ENCODE measurements at regions of chr13 and their contacts with region 1.

Region 1: GRCh38 chr13:26377038-26377437 is 123.1 kb downstream of the CDK8 start:
- DNase-seq: peak; percentile 44
- ATAC-seq: peak; percentile 45; the same call in 1 of the 2 replicates
- H3K4me3 ChIP-seq: no peak overlapping the region
- H3K27ac ChIP-seq: no peak overlapping the region
- H3K4me1 ChIP-seq: no peaks in the 10 kb centered on the region
- H3K27me3 ChIP-seq: no peaks in the 10 kb centered on the region
- CTCF ChIP-seq: peak; percentile 58

Region 2: GRCh38 chr13:26498656-26499591 is 121.9 kb after region 1 on chr13:
- CTCF ChIA-PET with region 1: interaction called, 3 read pairs
- POLR2A ChIA-PET with region 1: no interaction called
- intact Hi-C with region 1: loop called (anchors 5 kb)
- DNase-seq: peak; percentile 28
- ATAC-seq: peak; percentile 53
- H3K4me3 ChIP-seq: no peak overlapping the region
- H3K27ac ChIP-seq: no peak overlapping the region
- H3K4me1 ChIP-seq: no peaks in the 10 kb centered on the region
- H3K27me3 ChIP-seq: no peaks in the 10 kb centered on the region; the same call in 1 of the 2 replicates
- CTCF ChIP-seq: peak; percentile 29; the same call in 1 of the 2 replicates

Measured in PC-3 (cell line).